HepG2 (cell line): ENCODE measurements at regions of chr10 and their contacts with region 1.

Region 1: DNA sequence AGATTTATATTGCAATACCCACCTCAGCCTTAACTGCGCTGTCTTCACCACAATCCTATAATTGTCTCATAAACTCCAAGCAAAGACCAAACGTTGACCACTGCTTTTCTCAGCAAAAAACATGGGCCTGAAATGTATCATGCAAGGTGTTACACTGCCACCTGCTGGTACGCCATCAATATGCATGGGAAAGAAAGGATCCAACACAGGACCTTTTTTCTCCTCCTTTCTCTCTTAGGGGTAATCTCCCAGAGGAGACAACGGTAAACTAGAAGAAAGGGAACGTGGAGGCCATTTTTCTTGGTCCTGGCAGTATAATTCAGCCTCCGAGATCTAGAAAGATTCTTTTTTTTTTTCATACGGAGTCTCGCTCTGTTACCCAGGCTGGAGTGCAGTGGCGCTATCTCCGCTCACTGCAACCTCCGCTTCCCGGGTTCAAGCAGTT is 79.1 kb upstream of the MPP7 start:
- DNase-seq: peak; percentile 88
- ATAC-seq: peak; percentile 91
- H3K4me3 ChIP-seq: no peak overlapping the region
- H3K27ac ChIP-seq: no peak overlapping the region
- H3K4me1 ChIP-seq: peaks cover 44% of the 10 kb centered on the region
- H3K27me3 ChIP-seq: no peaks in the 10 kb centered on the region; a peak in 1 of 5 replicates
- CTCF ChIP-seq: peak; percentile 95
- EP300 ChIP-seq: peak in 1 of 2 experiments; percentile 38; a peak in 1 of 4 replicates
- POLR2A ChIP-seq: no peak
- RAD21 ChIP-seq: peak; percentile 96

Region 2: GRCh38 chr10:27742195-27743011 is 639.5 kb before region 1 on chr10:
- CTCF ChIA-PET with region 1: interaction called, 9 read pairs
- POLR2A ChIA-PET with region 1: no interaction called
- in situ Hi-C with region 1: loop called (anchors 25 kb)
- intact Hi-C with region 1: loop called (anchors 1 kb)
- DNase-seq: peak; percentile 41
- ATAC-seq: peak; percentile 93
- H3K4me3 ChIP-seq: peak overlapping the region; percentile 61 to 79 (median 75)
- H3K27ac ChIP-seq: no peak overlapping the region
- H3K4me1 ChIP-seq: peaks cover 20% of the 10 kb centered on the region
- H3K27me3 ChIP-seq: peaks cover 8 to 36% of the 10 kb centered on the region in 2 experiments
- CTCF ChIP-seq: peak; percentile 80
- EP300 ChIP-seq: no peak
- POLR2A ChIP-seq: no peak
- RAD21 ChIP-seq: peak; percentile 85

Region 3: DNA sequence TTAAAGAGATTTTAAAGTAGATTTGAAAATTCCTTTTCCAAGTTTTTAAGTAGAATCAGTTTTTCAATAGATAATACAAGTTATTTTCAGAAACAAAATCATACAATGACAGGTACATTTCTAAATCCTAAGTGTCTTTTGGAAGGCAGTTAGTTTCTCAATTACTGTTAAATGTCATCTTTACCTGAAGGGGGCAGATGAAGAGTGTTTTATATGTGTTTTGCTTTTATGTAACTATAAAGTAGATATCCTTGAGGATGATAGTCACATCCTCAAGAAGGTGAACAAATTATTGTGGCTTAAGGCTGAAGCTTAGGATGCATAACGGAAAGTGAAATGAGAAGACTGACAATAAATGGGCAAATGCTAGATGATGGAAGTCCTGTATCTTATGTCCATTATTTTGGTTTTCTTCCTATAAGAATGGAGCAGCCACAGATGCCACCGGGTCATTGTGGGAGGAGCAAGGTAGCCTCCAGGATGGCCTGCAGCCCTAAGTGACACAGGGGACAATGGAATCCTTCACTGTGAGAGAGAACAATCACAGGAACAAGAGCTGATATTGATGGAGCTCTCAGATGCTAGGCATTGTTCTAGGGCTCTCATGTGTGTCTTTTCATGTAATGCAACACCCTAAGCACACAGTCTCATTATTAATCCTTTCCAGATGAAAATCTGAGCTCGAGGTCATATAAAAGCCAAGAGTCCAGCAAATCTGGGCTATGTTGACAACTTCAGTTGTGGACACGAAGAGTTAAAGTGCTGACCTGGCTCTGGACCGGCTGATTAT is 622.2 kb before region 1 on chr10:
- CTCF ChIA-PET with region 1: no interaction called
- POLR2A ChIA-PET with region 1: no interaction called
- in situ Hi-C with region 1: no loop called
- intact Hi-C with region 1: no loop called
- DNase-seq: no peak
- ATAC-seq: no peak
- H3K4me3 ChIP-seq: no peak overlapping the region
- H3K27ac ChIP-seq: no peak overlapping the region
- H3K4me1 ChIP-seq: no peaks in the 10 kb centered on the region
- H3K27me3 ChIP-seq: peaks cover 1 to 14% of the 10 kb centered on the region in 2 experiments; a peak in 3 of 5 replicates
- CTCF ChIP-seq: no peak
- EP300 ChIP-seq: no peak
- POLR2A ChIP-seq: no peak
- RAD21 ChIP-seq: no peak

Region 4: DNA sequence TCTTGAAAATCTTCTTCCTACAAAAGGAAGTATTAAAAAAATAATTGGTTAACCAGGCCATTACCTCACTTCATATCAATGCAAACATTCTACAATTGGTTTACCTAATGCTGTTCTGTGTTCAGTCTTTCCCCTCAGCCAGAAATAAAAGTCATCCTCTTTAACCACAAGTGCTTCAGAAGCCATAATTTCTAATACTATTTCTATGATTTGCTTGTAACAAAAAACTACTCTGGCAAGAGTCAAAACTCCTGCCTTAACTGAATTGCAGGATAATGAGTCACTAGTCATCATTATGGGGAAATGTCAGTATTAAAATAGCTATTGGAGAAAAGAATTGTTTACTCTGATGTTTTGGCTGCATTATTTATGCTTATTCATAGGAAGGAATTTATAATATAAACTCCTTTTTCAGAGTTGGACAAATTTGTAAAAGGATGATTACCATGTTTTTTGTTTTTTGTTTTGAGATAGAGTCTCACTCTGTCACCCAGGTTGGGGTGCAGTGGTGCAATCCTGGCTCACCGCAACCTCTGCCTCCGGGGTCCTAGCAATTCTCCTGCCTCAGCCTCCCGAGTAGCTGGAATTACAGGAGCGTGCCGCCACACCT is 327.6 kb before region 1 on chr10:
- CTCF ChIA-PET with region 1: no interaction called
- POLR2A ChIA-PET with region 1: no interaction called
- in situ Hi-C with region 1: no loop called
- intact Hi-C with region 1: no loop called
- DNase-seq: no peak
- ATAC-seq: no peak
- H3K4me3 ChIP-seq: no peak overlapping the region
- H3K27ac ChIP-seq: no peak overlapping the region
- H3K4me1 ChIP-seq: no peaks in the 10 kb centered on the region
- H3K27me3 ChIP-seq: no peaks in the 10 kb centered on the region
- CTCF ChIP-seq: no peak
- EP300 ChIP-seq: no peak
- POLR2A ChIP-seq: no peak
- RAD21 ChIP-seq: no peak

Region 5: GRCh38 chr10:28179006-28179742 is 202.8 kb before region 1 on chr10:
- CTCF ChIA-PET with region 1: no interaction called
- POLR2A ChIA-PET with region 1: no interaction called
- in situ Hi-C with region 1: no loop called
- intact Hi-C with region 1: loop called (anchors 5 kb)
- DNase-seq: peak; percentile 46
- ATAC-seq: no peak
- H3K4me3 ChIP-seq: no peak overlapping the region
- H3K27ac ChIP-seq: no peak overlapping the region
- H3K4me1 ChIP-seq: peaks cover 27% of the 10 kb centered on the region
- H3K27me3 ChIP-seq: no peaks in the 10 kb centered on the region
- CTCF ChIP-seq: peak; percentile 63
- EP300 ChIP-seq: no peak
- POLR2A ChIP-seq: no peak
- RAD21 ChIP-seq: peak; percentile 19; the same call in 1 of the 2 replicates

Region 6: GRCh38 chr10:28263136-28263820 is 118.6 kb before region 1 on chr10:
- CTCF ChIA-PET with region 1: no interaction called
- POLR2A ChIA-PET with region 1: interaction called, 3 read pairs
- in situ Hi-C with region 1: loop called (anchors 5 kb)
- intact Hi-C with region 1: no loop called
- DNase-seq: peak; percentile 46
- ATAC-seq: peak; percentile 83
- H3K4me3 ChIP-seq: peak overlapping the region in 2 of 3 experiments; percentile 3 to 59; a peak in 3 of 6 replicates
- H3K27ac ChIP-seq: peak overlapping the region; percentile 52
- H3K4me1 ChIP-seq: peaks cover 31% of the 10 kb centered on the region
- H3K27me3 ChIP-seq: no peaks in the 10 kb centered on the region
- CTCF ChIP-seq: no peak
- EP300 ChIP-seq: peak in 1 of 2 experiments; percentile 36; a peak in 1 of 4 replicates
- POLR2A ChIP-seq: no peak
- RAD21 ChIP-seq: no peak

Region 7: GRCh38 chr10:28367929-28368484 is 13.9 kb before region 1 on chr10:
- CTCF ChIA-PET with region 1: no interaction called
- POLR2A ChIA-PET with region 1: no interaction called
- in situ Hi-C with region 1: no loop called
- intact Hi-C with region 1: loop called (anchors 2 kb)
- DNase-seq: no peak
- ATAC-seq: no peak
- H3K4me3 ChIP-seq: no peak overlapping the region
- H3K27ac ChIP-seq: no peak overlapping the region
- H3K4me1 ChIP-seq: peaks cover 55% of the 10 kb centered on the region
- H3K27me3 ChIP-seq: no peaks in the 10 kb centered on the region
- CTCF ChIP-seq: no peak
- EP300 ChIP-seq: no peak
- POLR2A ChIP-seq: no peak
- RAD21 ChIP-seq: no peak

Region 8: DNA sequence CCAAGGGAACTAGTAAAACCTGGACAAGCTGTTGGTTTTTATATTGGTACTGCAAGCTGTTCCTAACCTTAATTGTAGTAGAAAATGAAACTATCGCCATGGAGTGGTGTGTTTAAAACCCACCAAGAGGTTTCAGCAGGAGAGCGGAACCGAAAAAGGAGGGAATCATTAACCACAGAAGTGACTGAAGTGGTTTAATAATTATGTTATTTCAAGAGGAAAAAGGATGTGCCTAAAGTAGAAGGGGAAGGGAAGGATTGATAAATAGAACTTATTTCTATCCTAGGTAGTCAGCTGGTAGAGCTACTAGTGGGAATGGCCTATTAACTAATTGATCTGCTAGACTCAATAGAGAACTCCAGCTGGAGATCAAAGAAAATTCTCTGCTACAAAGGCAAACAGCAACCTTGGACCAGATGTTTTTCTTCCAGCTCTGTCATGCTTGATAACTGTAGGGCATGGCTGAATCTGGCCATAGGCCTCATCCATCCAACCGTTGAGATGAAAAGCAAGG is 387.2 kb after region 1 on chr10:
- CTCF ChIA-PET with region 1: no interaction called
- POLR2A ChIA-PET with region 1: no interaction called
- in situ Hi-C with region 1: no loop called
- intact Hi-C with region 1: no loop called
- DNase-seq: peak; percentile 86
- ATAC-seq: peak; percentile 91
- H3K4me3 ChIP-seq: peak overlapping the region in 1 of 3 experiments; percentile 1; a peak in 1 of 6 replicates
- H3K27ac ChIP-seq: peak overlapping the region; percentile 17
- H3K4me1 ChIP-seq: peaks cover 46% of the 10 kb centered on the region
- H3K27me3 ChIP-seq: no peaks in the 10 kb centered on the region
- CTCF ChIP-seq: no peak
- EP300 ChIP-seq: peak in 1 of 2 experiments; percentile 59; a peak in 2 of 4 replicates
- POLR2A ChIP-seq: no peak
- RAD21 ChIP-seq: no peak